Psoas muscle (tissue), 8 donors: ENCODE measurements at regions of chr3 and their contacts with region 1.

Region 1: GRCh38 chr3:127822698-127823425 is 547 bp upstream of the MGLL start:
- DNase-seq: peak; percentile 77 to 88
- ATAC-seq: peak; percentile 83 to 88 (median 86)
- H3K4me3 ChIP-seq: peak overlapping the region; percentile 91
- H3K27ac ChIP-seq: peak overlapping the region; percentile 93
- H3K4me1 ChIP-seq: peaks cover 30% of the 10 kb centered on the region
- H3K27me3 ChIP-seq: no peaks in the 10 kb centered on the region
- CTCF ChIP-seq: peak; percentile 38

Region 2: GRCh38 chr3:127574880-127575878 is 247.7 kb before region 1 on chr3:
- intact Hi-C with region 1: loop called in 1 of 2 experiments (anchors 5 kb)
- DNase-seq: peak; percentile 83 to 91
- ATAC-seq: peak; percentile 87 to 97 (median 93)
- H3K4me3 ChIP-seq: no peak overlapping the region
- H3K27ac ChIP-seq: no peak overlapping the region
- H3K4me1 ChIP-seq: peaks cover 7% of the 10 kb centered on the region
- H3K27me3 ChIP-seq: no peaks in the 10 kb centered on the region
- CTCF ChIP-seq: peak; percentile 93

Region 3: GRCh38 chr3:127672516-127673190 is 150.2 kb before region 1 on chr3 and contains the start of gene ABTB1:
- intact Hi-C with region 1: loop called in 1 of 2 experiments (anchors 5 kb)
- DNase-seq: peak; percentile 88 to 94
- ATAC-seq: peak; percentile 89 to 91 (median 91)
- H3K4me3 ChIP-seq: peak within 1 kb of the TSS; percentile 98
- H3K27ac ChIP-seq: peak within 1 kb of the TSS; percentile 99
- H3K4me1 ChIP-seq: peaks cover 12% of the 10 kb centered on the region
- H3K27me3 ChIP-seq: no peaks in the 10 kb centered on the region
- CTCF ChIP-seq: no peak
- total RNA-seq, gene ABTB1: 22.8 to 34.5 (median 27.6) TPM

Region 4: GRCh38 chr3:127697551-127698240 is 125.2 kb before region 1 on chr3:
- intact Hi-C with region 1: loop called (anchors 5 kb)
- DNase-seq: peak; percentile 83 to 93
- ATAC-seq: peak; percentile 78 to 87 (median 80)
- H3K4me3 ChIP-seq: peak overlapping the region; percentile 60
- H3K27ac ChIP-seq: peak overlapping the region; percentile 94
- H3K4me1 ChIP-seq: peaks cover 50% of the 10 kb centered on the region
- H3K27me3 ChIP-seq: no peaks in the 10 kb centered on the region
- CTCF ChIP-seq: no peak

Region 5: GRCh38 chr3:127750226-127751031 is 72.4 kb before region 1 on chr3:
- intact Hi-C with region 1: loop called in 1 of 2 experiments (anchors 5 kb)
- DNase-seq: no peak
- ATAC-seq: peak; percentile 34 to 61 (median 48)
- H3K4me3 ChIP-seq: no peak overlapping the region
- H3K27ac ChIP-seq: peak overlapping the region; percentile 70
- H3K4me1 ChIP-seq: peaks cover 45% of the 10 kb centered on the region
- H3K27me3 ChIP-seq: no peaks in the 10 kb centered on the region
- CTCF ChIP-seq: no peak

Region 6: GRCh38 chr3:127791211-127791946 is 31.5 kb before region 1 on chr3:
- intact Hi-C with region 1: loop called in 1 of 2 experiments (anchors 5 kb)
- DNase-seq: peak in 1 of 2 donors; percentile 34
- ATAC-seq: peak in 3 of 4 donors; percentile 28 to 48 (median 40)
- H3K4me3 ChIP-seq: no peak overlapping the region
- H3K27ac ChIP-seq: peak overlapping the region; percentile 92
- H3K4me1 ChIP-seq: peaks cover 72% of the 10 kb centered on the region
- H3K27me3 ChIP-seq: no peaks in the 10 kb centered on the region
- CTCF ChIP-seq: peak; percentile 34

Region 7: DNA sequence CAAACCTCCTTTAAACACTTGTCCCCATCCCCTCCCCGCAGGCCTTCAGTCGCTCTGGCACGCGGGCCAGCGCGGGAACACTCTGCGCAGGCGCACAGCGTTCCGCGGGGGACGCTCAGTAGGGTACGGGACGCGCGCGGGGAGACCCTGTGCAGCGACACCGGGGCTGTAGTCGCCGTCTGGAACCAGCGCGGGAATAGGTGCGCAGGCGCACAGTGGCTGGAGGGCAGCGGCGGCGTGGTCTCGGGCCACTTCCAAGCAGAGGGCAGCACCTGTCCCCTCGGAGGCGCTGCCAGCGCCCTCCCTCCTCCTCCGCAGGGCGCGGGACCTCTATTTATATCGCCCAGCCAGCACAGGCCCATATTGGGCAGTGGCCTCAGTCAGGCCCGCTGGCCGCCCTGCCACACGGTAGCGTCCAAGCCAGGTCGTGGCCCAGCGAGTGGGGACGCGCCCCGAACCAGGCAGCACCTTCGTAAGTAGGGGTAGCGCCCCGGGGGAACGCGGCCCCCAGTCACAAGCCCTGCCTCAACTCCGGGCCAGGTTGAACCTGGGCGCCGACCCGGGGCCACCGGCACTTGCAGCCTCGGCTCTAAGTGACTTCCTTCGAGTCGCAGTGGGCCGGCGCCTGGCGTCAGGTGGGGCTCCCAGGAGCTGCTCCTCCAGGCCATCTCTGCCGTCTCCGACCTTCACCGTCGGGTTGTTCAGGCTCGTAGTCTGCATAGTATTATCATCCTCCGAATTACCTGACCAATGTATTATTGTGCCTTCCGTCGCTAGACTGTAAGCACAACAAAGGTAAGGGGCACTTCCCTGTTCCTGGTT is 92.5 kb after region 1 on chr3 and contains the start of gene KBTBD12:
- intact Hi-C with region 1: loop called in 1 of 2 experiments (anchors 5 kb)
- DNase-seq: peak; percentile 79 to 94
- ATAC-seq: peak; percentile 97 to 99 (median 98)
- H3K4me3 ChIP-seq: peak within 1 kb of the TSS; percentile 75
- H3K27ac ChIP-seq: peak within 1 kb of the TSS; percentile 97
- H3K4me1 ChIP-seq: peaks cover 42% of the 10 kb centered on the region
- H3K27me3 ChIP-seq: no peaks in the 10 kb centered on the region
- CTCF ChIP-seq: no peak
- total RNA-seq, gene KBTBD12: 20.6 to 47.5 (median 29.5) TPM